ENCODE measurements at regions of chr19 and their contacts with region 1.

Region 1: GRCh38 chr19:51948975-51949374 is 21.7 kb downstream of the ZNF613 start:
- DNase-seq: no peak

Region 2: GRCh38 chr19:51272183-51272810 is 676.7 kb before region 1 on chr19:
- intact Hi-C with region 1: no loop called
- DNase-seq: no peak

Region 3: DNA sequence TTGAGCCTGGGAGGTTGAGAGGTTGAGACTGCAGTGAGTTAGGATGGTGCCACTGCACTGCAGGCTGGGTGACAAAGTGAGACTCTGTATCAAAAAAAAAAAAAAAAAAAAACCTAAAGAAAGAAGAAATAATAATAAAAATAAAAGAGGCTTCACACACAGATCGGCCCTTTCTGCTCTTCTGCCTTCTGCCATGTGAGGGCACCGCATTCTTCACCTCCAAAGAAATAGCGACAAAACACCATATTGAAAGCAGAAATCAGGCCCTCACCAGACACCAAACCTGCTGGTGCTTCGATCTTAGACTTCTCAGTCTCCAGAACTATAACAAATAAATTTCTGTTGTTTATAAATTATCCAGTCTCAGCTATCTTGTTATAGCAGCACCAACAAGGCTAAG is 47.1 kb before region 1 on chr19:
- intact Hi-C with region 1: loop called in 1 of 2 experiments (anchors 1 kb)
- DNase-seq: no peak